K562 (cell line): ENCODE measurements at regions of chr3 and their contacts with region 1.

Region 1: GRCh38 chr3:118884748-118885206 is 149.9 kb downstream of the IGSF11 start:
- DNase-seq: peak; percentile 19 to 58 (median 28)
- ATAC-seq: peak; percentile 87
- H3K4me3 ChIP-seq: no peak overlapping the region
- H3K27ac ChIP-seq: no peak overlapping the region
- H3K4me1 ChIP-seq: no peaks in the 10 kb centered on the region
- H3K27me3 ChIP-seq: no peaks in the 10 kb centered on the region
- CTCF ChIP-seq: peak; percentile 70 to 87 (median 86)
- EP300 ChIP-seq: no peak
- POLR2A ChIP-seq: no peak
- RAD21 ChIP-seq: peak; percentile 91 to 96

Region 2: DNA sequence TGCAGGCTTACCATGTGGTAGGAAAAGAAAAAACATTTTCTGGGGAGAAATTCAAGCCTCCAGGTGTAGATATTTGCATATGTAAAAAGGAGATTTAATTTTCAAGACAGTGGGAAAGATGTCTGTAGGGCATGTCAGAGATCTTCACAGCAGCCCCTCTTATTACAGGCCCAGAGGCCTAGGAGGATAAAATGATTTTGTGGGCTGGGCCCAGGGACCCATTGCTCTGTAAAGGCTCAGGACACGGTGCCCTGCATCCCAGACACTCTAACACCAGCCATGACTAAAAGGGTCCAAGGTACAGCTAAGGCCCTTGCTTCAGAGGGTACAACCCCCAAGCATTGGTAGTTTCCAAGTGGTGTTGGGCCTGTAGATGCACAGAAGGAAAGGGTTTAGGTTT is 530.2 kb before region 1 on chr3:
- CTCF ChIA-PET with region 1: no interaction called
- POLR2A ChIA-PET with region 1: no interaction called
- in situ Hi-C with region 1: no loop called
- intact Hi-C with region 1: no loop called
- DNase-seq: no peak
- ATAC-seq: no peak
- H3K4me3 ChIP-seq: no peak overlapping the region
- H3K27ac ChIP-seq: no peak overlapping the region
- H3K4me1 ChIP-seq: no peaks in the 10 kb centered on the region
- H3K27me3 ChIP-seq: no peaks in the 10 kb centered on the region
- CTCF ChIP-seq: no peak
- EP300 ChIP-seq: no peak
- POLR2A ChIP-seq: no peak
- RAD21 ChIP-seq: no peak

Region 3: DNA sequence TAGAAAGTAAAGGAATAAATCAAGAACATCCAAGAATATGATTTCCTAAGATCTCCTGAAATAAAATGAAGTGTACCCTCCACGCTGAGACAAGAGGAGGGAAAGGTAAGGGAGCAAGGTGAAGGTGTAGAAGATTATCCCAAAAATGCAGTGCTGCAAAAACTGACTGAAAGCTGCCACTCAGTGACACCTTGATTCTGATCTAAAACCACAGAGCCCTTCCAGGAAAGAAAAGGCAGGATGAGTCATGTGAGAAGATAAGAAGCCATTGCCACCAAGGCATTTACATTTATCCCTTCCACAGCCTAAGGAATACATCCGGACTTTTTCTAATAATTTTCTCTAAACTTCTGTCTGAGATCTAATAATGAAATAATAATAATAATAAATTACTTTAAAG is 99.9 kb after region 1 on chr3:
- CTCF ChIA-PET with region 1: no interaction called
- POLR2A ChIA-PET with region 1: no interaction called
- in situ Hi-C with region 1: no loop called
- intact Hi-C with region 1: loop called (anchors 5 kb)
- DNase-seq: peak in 3 of 4 experiments; percentile 7 to 61 (median 32)
- ATAC-seq: peak; percentile 60; the same call in 2 of the 3 replicates
- H3K4me3 ChIP-seq: no peak overlapping the region
- H3K27ac ChIP-seq: no peak overlapping the region
- H3K4me1 ChIP-seq: peaks cover 0 to 17% of the 10 kb centered on the region in 2 experiments; a peak in 3 of 5 replicates
- H3K27me3 ChIP-seq: no peaks in the 10 kb centered on the region
- CTCF ChIP-seq: no peak
- EP300 ChIP-seq: peak; percentile 78
- POLR2A ChIP-seq: no peak
- RAD21 ChIP-seq: no peak

Region 4: DNA sequence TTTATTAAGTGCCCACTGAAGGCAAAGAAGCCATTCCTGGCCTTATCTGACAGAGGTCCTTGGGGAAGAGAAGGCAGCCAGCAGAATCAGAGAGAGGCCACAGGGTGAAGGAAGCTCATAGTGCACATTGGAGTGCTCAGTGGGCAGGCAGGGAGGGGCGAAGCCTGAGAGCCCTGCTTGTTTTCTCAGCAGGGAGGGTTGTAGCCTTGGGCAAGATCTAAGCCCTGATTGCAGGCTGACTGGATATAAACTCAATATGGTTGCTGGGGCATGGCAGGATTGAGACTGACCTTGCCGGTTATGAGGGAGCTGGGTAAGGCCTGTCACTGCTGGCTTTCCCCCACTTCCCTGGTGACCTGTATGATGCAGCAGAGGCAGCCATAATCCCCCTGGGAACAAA is 157.4 kb after region 1 on chr3:
- CTCF ChIA-PET with region 1: interaction called, 3 read pairs
- POLR2A ChIA-PET with region 1: no interaction called
- in situ Hi-C with region 1: loop called (anchors 5 kb)
- intact Hi-C with region 1: no loop called
- DNase-seq: no peak
- ATAC-seq: no peak
- H3K4me3 ChIP-seq: no peak overlapping the region
- H3K27ac ChIP-seq: no peak overlapping the region
- H3K4me1 ChIP-seq: no peaks in the 10 kb centered on the region
- H3K27me3 ChIP-seq: no peaks in the 10 kb centered on the region
- CTCF ChIP-seq: no peak
- EP300 ChIP-seq: no peak
- POLR2A ChIP-seq: no peak
- RAD21 ChIP-seq: no peak

Region 5: DNA sequence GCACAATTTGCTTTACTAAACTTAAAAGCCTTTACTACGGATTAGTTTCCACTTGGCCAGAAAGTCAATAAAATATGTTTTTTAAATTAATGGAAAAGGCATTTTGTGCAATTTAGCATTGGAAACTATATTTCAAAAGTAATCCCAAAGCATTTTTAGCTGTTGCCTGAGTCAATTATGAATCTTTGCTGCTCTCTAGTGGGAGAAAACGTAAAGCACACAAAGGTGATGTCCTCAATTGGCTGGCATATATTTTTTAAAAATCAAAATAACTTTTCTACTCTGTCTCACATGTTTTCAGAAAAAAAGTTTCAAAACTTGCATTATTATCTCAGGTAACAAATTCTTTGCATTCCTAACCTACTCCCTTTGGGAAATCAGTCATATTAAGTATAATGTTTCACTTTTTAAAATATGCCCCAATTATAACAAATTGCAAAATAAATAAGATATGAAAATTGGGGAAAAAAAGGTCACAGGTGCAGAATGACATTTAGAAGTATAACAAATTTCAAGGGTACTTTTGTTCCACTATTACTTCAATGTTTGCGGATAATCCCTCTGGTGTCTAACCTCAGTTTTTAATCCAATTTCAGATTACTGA is 213.9 kb after region 1 on chr3:
- CTCF ChIA-PET with region 1: interaction called, 83 read pairs
- POLR2A ChIA-PET with region 1: no interaction called
- in situ Hi-C with region 1: loop called (anchors 5 kb)
- intact Hi-C with region 1: loop called (anchors 1 kb)
- DNase-seq: peak; percentile 17 to 44 (median 21)
- ATAC-seq: peak; percentile 64; the same call in 2 of the 3 replicates
- H3K4me3 ChIP-seq: no peak overlapping the region
- H3K27ac ChIP-seq: no peak overlapping the region
- H3K4me1 ChIP-seq: no peaks in the 10 kb centered on the region
- H3K27me3 ChIP-seq: no peaks in the 10 kb centered on the region
- CTCF ChIP-seq: peak; percentile 47 to 73 (median 52); a peak in 4 of 6 replicates
- EP300 ChIP-seq: no peak
- POLR2A ChIP-seq: no peak
- RAD21 ChIP-seq: peak; percentile 93 to 94

Region 6: DNA sequence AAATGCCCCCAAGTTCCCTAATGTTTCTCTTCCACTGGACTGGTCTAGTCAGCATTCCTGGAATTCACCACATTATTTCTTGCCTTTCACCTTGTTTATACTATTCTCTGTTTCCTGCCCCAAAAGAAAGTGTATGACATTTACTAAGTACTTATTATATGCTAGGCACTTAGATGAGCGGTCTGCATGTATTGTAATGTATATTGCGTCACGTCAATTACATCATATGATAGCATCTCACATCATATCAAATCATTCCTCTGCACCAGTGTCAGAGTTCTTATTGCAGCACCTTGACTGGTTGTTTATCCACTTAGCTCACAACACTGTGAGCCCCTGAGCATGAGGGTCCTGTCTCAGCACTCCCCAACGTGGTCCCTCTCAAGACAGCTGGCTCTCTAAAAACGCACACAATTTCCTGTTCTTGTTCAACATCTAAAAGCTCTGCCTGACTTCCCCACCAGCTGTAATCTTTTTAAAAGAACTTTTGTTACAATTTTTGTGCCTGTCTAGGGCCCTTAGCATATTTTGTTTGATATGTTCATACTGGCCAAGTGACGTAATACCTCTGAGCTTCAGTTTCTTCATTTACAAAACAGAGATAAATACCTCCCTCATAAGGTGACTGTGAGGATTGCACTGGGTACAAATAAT is 468.2 kb after region 1 on chr3:
- CTCF ChIA-PET with region 1: no interaction called
- POLR2A ChIA-PET with region 1: no interaction called
- in situ Hi-C with region 1: no loop called
- intact Hi-C with region 1: loop called (anchors 10 kb)
- DNase-seq: peak in 1 of 4 experiments; percentile 41
- ATAC-seq: peak; percentile 89
- H3K4me3 ChIP-seq: no peak overlapping the region
- H3K27ac ChIP-seq: no peak overlapping the region
- H3K4me1 ChIP-seq: peaks cover 0 to 7% of the 10 kb centered on the region in 2 experiments; a peak in 4 of 5 replicates
- H3K27me3 ChIP-seq: no peaks in the 10 kb centered on the region; a peak in 1 of 5 replicates
- CTCF ChIP-seq: peak; percentile 28 to 51 (median 30); a peak in 4 of 6 replicates
- EP300 ChIP-seq: no peak
- POLR2A ChIP-seq: no peak
- RAD21 ChIP-seq: peak; percentile 34 to 68; a peak in 3 of 4 replicates

Region 7: GRCh38 chr3:119388577-119388976 is 503.8 kb after region 1 on chr3:
- CTCF ChIA-PET with region 1: interaction called, 10 read pairs
- POLR2A ChIA-PET with region 1: no interaction called
- in situ Hi-C with region 1: no loop called
- intact Hi-C with region 1: loop called (anchors 2 kb)
- DNase-seq: peak in 1 of 4 experiments; percentile 32
- ATAC-seq: peak; percentile 84
- H3K4me3 ChIP-seq: no peak overlapping the region
- H3K27ac ChIP-seq: no peak overlapping the region
- H3K4me1 ChIP-seq: no peaks in the 10 kb centered on the region
- H3K27me3 ChIP-seq: peaks cover 0 to 6% of the 10 kb centered on the region in 2 experiments; a peak in 1 of 5 replicates
- CTCF ChIP-seq: peak; percentile 33 to 63 (median 34); a peak in 4 of 6 replicates
- EP300 ChIP-seq: no peak
- POLR2A ChIP-seq: no peak
- RAD21 ChIP-seq: peak; percentile 62 to 75